Activated B cell treated with CpG ODN at 0.5 μM for 24 hours (primary cell): ENCODE measurements at regions of chr10 and their contacts with region 1.

Region 1: DNA sequence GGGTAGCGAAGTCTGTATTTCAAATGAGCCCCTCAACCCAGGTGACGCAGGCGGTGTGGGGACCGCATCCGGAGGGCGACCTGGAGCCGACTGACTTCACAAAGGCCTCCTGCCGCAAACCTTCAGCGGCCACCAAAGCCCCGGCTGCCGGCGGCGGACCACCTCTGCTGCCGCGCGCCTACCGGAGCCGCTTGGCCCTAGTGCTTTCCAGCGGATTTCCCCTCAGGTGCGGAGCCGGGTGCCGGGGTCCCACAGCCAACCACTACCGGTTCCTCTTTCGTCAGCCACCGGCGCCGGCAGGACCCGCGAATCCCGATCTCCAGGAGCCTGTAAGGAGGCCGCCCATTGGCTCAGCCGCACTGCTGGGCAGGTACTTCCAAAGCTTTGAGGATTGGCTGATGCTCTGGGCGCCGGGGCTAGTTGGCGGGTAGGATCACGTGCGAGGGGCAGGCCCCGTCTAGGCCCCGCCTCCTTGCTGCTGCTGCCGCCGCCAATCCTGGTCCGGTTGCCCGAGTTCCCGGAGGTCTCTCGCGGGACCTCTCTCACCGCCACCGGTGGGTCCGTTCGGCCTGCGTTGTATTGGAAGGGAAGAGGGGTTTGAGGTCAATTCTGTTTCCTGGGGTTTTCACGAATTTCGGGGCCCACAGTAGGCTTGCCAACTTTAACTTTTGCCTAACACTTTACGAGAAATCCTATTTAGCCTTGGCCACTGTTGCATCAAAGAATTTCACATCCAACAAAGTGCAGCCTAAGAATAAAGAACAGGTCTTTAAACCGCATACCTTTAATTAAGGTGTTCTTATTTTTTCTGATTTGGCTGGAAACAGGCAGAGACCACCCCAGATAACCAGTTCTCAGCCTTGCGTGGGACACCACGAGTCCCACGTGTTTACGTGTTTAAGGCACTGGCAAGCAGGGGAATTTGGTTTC is at the start of gene GSTO2:
- DNase-seq: peak; percentile 90
- ATAC-seq: peak; percentile 96
- H3K4me3 Mint-ChIP-seq: peak within 1 kb of the TSS; percentile 91
- H3K27ac Mint-ChIP-seq: peak within 1 kb of the TSS; percentile 95
- H3K4me1 Mint-ChIP-seq: peaks cover 41% of the 10 kb centered on the region
- H3K27me3 Mint-ChIP-seq: peaks cover 1% of the 10 kb centered on the region
- CTCF ChIP-seq: no peak
- total RNA-seq, gene GSTO2: 0.56 and 0.91 TPM in 2 replicates

Region 2: DNA sequence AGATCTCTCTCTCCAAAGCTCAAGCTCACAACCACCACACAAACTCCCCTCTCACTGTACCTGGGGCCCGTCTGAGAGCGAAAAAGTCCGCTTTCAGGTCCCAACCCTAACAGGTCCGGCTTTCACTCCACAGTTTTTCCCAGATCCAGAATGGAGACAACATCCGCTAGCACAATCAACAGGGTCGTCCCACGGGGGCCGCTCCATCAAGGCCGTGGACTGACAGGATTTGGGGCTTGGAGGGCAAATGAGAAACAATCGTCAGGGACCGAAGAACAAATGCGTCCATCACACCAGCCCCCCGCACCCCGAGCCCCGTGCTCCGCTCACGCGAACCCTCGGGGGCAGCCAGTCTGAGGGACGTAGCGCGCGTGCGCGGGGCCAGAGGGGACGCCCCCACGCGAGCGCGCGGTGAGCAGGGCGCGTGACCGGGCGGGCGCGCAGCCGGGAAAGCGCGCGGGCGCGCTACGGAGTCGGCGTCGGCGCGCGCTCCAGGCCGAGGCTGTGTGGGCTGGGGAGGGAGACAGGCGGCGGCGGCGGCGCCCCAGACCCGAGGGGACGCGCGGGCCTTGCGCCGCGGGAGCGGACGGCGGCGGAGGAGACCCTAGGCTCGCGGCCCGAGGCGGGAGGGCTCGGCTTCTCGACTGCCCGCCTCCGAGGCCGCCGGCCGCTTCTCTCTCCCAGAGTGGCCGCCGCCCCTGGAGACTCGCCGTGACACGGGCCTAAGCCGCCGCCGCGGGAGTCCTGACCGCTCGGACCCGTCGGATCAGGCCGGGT is 302.1 kb before region 1 on chr10 and contains the start of gene SLK:
- CTCF ChIA-PET with region 1: no interaction called
- POLR2A ChIA-PET with region 1: no interaction called
- intact Hi-C with region 1: loop called (anchors 5 kb)
- DNase-seq: peak; percentile 89
- ATAC-seq: peak; percentile 87
- H3K4me3 Mint-ChIP-seq: peak within 1 kb of the TSS; percentile 95
- H3K27ac Mint-ChIP-seq: peak within 1 kb of the TSS; percentile 92
- H3K4me1 Mint-ChIP-seq: peaks cover 42% of the 10 kb centered on the region
- H3K27me3 Mint-ChIP-seq: no peaks in the 10 kb centered on the region
- CTCF ChIP-seq: no peak
- total RNA-seq, gene SLK: 12.8 and 14.0 TPM in 2 replicates

Region 3: DNA sequence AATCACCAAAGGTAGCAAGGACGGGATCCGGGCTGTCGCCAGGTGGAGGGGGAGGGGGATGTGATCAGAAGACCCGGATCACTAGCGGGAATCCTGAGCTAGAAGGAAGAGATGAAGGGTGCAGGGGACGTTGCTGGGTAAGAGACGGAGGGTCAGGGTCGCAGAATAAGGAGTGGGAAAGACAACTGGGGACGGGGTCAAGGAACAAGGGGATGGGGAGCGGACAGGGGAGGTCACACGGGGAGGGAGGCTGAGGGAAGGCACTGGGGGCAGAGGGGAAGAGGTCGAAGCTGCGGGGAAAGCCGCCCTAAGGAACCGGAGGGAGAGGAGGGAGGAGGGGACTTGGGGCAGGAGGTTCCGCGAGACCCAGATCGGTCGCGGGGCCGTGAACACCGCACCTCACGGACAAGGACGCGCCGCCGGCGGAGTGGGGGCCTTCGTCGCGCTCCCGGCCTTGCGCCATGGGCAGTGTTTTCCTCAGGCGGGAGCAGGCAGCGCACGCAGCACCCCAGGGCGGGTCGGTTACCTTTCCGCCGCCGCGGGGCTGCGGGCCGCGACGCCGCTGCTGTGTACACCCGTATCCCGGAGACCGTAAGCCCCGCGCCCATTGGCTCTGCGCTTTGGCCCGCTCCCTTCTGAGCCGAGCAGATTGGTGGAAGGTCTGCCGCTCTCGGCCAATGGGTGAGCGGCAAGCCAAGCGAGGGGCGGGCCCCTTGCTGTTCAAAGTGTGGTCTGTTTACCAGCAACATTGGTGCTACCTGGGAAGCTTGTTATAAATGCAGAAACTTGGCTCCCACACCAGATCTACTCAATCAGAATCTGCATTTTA is 37.0 kb before region 1 on chr10 and contains the start of gene CFAP43:
- CTCF ChIA-PET with region 1: interaction called, 3 read pairs
- POLR2A ChIA-PET with region 1: interaction called, 4 read pairs
- intact Hi-C with region 1: loop called (anchors 1 kb)
- DNase-seq: peak; percentile 96
- ATAC-seq: peak; percentile 100
- H3K4me3 Mint-ChIP-seq: peak within 1 kb of the TSS; percentile 83
- H3K27ac Mint-ChIP-seq: peak within 1 kb of the TSS; percentile 41
- H3K4me1 Mint-ChIP-seq: peaks cover 12% of the 10 kb centered on the region
- H3K27me3 Mint-ChIP-seq: peaks cover 16% of the 10 kb centered on the region
- CTCF ChIP-seq: no peak
- total RNA-seq, gene CFAP43: 0.22 TPM in 1 of 2 replicates, not detected in the other

Region 4: DNA sequence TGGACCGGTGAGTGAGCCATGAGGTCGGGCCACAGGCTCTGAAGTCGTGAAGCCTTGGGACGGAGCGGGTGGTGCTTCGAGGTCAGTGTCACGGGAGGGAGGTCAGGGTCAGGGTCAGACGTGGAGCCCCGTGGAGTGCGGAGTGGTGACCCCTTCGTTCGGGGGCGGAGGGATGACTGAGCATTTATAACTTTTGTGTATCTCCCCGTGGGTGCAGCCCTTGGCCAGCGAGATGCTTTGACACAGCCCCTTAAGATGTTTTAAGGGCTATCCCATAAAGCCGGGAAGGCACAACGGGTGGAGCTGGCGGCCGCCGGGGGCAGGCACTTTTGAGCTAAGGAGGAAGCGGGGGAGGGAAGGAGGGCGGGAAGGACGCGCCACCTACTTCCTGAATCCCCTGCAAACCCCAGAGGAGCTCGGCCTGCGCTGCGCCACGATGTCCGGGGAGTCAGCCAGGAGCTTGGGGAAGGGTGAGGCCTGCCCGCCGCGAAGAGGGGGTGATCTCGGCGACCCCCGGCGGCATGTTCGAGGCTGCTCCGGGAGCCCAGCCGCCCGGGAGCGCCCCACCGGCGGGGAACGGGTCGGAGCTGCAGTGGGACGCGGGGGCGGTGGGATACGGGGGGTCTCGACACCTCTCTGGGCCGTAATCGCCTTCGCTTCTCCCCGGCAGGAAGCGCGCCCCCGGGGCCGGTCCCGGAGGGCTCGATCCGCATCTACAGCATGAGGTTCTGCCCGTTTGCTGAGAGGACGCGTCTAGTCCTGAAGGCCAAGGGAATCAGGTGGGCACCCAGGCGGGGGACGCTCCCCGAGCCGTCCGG is 14.3 kb before region 1 on chr10 and contains the start of gene GSTO1:
- CTCF ChIA-PET with region 1: interaction called, 23 read pairs
- POLR2A ChIA-PET with region 1: interaction called, 45 read pairs
- intact Hi-C with region 1: loop called (anchors 1 kb)
- DNase-seq: peak; percentile 44
- ATAC-seq: peak; percentile 84
- H3K4me3 Mint-ChIP-seq: peak within 1 kb of the TSS; percentile 93
- H3K27ac Mint-ChIP-seq: peak within 1 kb of the TSS; percentile 88
- H3K4me1 Mint-ChIP-seq: peaks cover 37% of the 10 kb centered on the region
- H3K27me3 Mint-ChIP-seq: peaks cover 8% of the 10 kb centered on the region
- CTCF ChIP-seq: no peak
- total RNA-seq, gene GSTO1: 43.0 and 55.9 TPM in 2 replicates

Region 5: DNA sequence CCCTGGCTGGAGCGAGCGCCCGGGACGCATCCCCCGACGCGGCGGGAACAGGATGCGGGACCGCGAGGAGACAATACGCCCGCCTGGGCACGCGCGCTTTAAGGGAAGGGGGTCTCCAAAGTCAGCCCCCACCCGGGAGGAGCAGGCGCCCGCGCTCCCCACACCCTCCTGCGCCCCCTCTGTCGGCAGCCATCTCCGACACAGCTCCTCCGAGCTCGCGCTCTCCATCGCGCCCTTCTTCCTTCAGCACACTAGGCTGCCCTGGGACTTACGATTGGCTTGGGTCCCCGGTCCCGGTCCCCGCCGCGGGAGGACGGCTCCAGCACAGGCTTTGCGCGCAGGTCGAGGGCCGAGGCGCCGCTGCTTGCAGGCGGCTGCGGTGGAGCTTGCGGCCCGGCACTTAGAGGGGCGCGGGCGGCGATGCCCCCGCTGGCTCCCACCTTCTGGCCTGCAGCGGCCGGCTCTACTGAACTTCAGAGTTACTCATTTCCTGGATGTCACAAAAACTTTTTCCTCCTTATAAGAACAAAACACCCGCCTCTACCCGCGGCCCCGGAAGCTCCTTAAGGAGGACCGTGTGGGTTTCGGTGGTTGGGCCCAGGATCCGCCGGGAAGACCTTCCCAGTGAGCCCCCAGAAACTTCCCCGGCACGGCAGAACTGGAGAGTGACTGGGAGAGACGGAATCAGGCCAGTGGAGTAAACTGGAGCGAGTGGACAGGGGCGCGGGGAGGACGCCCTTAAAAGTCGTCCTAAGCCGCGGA is 69.2 kb after region 1 on chr10 and contains the start of gene ITPRIP:
- CTCF ChIA-PET with region 1: no interaction called
- POLR2A ChIA-PET with region 1: interaction called, 20 read pairs
- intact Hi-C with region 1: loop called (anchors 1 kb)
- DNase-seq: peak; percentile 67
- ATAC-seq: peak; percentile 65
- H3K4me3 Mint-ChIP-seq: peak within 1 kb of the TSS; percentile 98
- H3K27ac Mint-ChIP-seq: peak within 1 kb of the TSS; percentile 100
- H3K4me1 Mint-ChIP-seq: peaks cover 55% of the 10 kb centered on the region
- H3K27me3 Mint-ChIP-seq: no peaks in the 10 kb centered on the region
- CTCF ChIP-seq: no peak
- total RNA-seq, gene ITPRIP: 21.3 and 26.1 TPM in 2 replicates